Motor neuron (in vitro differentiated cells): ENCODE measurements at regions of chr3 and their contacts with region 1.

Region 1: DNA sequence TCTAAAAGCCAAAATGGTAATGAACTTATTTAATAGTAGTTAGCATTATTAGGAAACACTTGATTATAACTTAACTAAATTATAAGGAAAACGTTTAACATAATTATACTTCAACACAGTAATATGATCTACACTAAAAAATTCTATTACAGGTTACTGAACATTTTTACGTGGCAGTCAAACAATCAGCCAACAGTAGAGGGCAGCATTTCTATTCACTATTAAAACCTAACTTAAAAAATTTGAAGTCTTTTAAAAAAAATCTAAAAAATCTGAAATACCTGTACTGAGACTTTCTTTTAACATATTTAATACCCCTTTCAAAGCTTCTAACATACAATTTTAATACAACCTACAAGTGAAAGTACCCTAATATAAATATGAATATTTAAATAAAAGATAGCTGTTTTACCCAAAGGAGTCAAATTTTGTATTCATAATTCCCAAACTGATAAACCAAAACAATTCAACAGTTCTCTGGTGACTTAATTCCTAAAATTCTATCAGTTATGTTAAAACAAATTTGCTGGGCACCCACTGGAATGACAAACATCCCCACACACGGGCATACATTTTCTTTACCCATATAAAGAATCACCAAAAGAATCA is 41.5 kb downstream of the DLG1 start:
- ATAC-seq: no peak
- H3K4me3 ChIP-seq: no peak overlapping the region
- H3K27ac ChIP-seq: no peak overlapping the region
- H3K4me1 ChIP-seq: peaks cover 13 to 20% of the 10 kb centered on the region in 2 donors

Region 2: GRCh38 chr3:197487908-197488391 is 231.0 kb after region 1 on chr3:
- in situ Hi-C with region 1: loop called in 1 of 9 experiments (anchors 25 kb)
- ATAC-seq: peak in 7 of 8 experiments; percentile 80 to 100 (median 99)
- H3K4me3 ChIP-seq: no peak overlapping the region
- H3K27ac ChIP-seq: peak overlapping the region; percentile 15 to 25
- H3K4me1 ChIP-seq: peaks cover 19% of the 10 kb centered on the region in 2 donors

Region 3: GRCh38 chr3:197516517-197516889 is 259.6 kb after region 1 on chr3:
- in situ Hi-C with region 1: loop called in 6 of 9 experiments (anchors 10 to 25 kb)
- ATAC-seq: peak in 7 of 8 experiments; percentile 10 to 77 (median 22)
- H3K4me3 ChIP-seq: no peak overlapping the region
- H3K27ac ChIP-seq: no peak overlapping the region
- H3K4me1 ChIP-seq: peaks cover 21 to 29% of the 10 kb centered on the region in 2 donors